Natural killer cell (primary cell): ENCODE measurements at regions of chr15 and their contacts with region 1.

Region 1: GRCh38 chr15:82635798-82636197 is 11.4 kb downstream of the CPEB1 start:
- DNase-seq: no peak
- ATAC-seq: no peak
- H3K4me3 ChIP-seq: no peak overlapping the region
- H3K4me3 Mint-ChIP-seq: no peak overlapping the region
- H3K27ac ChIP-seq: no peak overlapping the region
- H3K27ac Mint-ChIP-seq: no peak overlapping the region
- H3K4me1 ChIP-seq: no peaks in the 10 kb centered on the region
- H3K4me1 Mint-ChIP-seq: no peaks in the 10 kb centered on the region
- H3K27me3 ChIP-seq: peaks cover 16% of the 10 kb centered on the region
- H3K27me3 Mint-ChIP-seq: peaks cover 33 to 53% of the 10 kb centered on the region in 2 donors
- CTCF ChIP-seq: no peak

Region 2: GRCh38 chr15:82602195-82602594 is 33.6 kb before region 1 on chr15:
- intact Hi-C with region 1: loop called (anchors 2 kb)
- DNase-seq: no peak
- ATAC-seq: no peak
- H3K4me3 ChIP-seq: no peak overlapping the region
- H3K4me3 Mint-ChIP-seq: no peak overlapping the region
- H3K27ac ChIP-seq: no peak overlapping the region
- H3K27ac Mint-ChIP-seq: no peak overlapping the region
- H3K4me1 ChIP-seq: no peaks in the 10 kb centered on the region
- H3K4me1 Mint-ChIP-seq: no peaks in the 10 kb centered on the region
- H3K27me3 ChIP-seq: peaks cover 6% of the 10 kb centered on the region
- H3K27me3 Mint-ChIP-seq: peaks cover 14 to 36% of the 10 kb centered on the region in 2 donors
- CTCF ChIP-seq: no peak

Region 3: DNA sequence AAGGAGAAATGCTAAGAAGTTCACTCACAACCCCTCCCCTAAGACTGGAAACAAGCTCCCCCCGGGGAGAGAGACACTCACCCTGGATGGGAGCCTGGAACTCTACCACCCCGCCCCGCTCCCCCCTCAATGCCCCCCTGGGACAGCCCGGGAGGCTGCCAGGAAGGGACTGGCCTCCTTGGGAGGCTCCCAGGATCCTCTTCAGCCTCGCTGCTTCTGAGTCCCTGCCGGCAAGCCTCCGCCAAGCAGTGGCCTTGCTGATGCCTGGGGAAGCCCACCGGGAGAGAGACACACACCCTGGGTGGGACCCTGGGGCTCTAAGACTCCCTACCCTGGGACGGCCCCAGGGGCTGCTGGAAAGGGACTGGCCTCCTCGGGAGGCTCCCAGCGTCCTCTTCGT is 22.1 kb before region 1 on chr15:
- intact Hi-C with region 1: no loop called
- DNase-seq: no peak
- ATAC-seq: peak in 1 of 3 donors; percentile 32
- H3K4me3 ChIP-seq: no peak overlapping the region
- H3K4me3 Mint-ChIP-seq: no peak overlapping the region
- H3K27ac ChIP-seq: no peak overlapping the region
- H3K27ac Mint-ChIP-seq: no peak overlapping the region
- H3K4me1 ChIP-seq: no peaks in the 10 kb centered on the region
- H3K4me1 Mint-ChIP-seq: no peaks in the 10 kb centered on the region
- H3K27me3 ChIP-seq: peaks cover 2% of the 10 kb centered on the region
- H3K27me3 Mint-ChIP-seq: peaks cover 19 to 35% of the 10 kb centered on the region in 2 donors
- CTCF ChIP-seq: no peak